GM10248 (cell line): ENCODE measurements at regions of chr9 and their contacts with region 1.

Region 1: GRCh38 chr9:37350486-37351190 is 71.9 kb upstream of the GRHPR start:
- DNase-seq: no peak
- CTCF ChIP-seq: no peak

Region 2: GRCh38 chr9:37337301-37337890 is 13.2 kb before region 1 on chr9:
- CTCF ChIA-PET with region 1: interaction called, 10 read pairs
- POLR2A ChIA-PET with region 1: no interaction called
- DNase-seq: no peak
- CTCF ChIP-seq: no peak

Region 3: DNA sequence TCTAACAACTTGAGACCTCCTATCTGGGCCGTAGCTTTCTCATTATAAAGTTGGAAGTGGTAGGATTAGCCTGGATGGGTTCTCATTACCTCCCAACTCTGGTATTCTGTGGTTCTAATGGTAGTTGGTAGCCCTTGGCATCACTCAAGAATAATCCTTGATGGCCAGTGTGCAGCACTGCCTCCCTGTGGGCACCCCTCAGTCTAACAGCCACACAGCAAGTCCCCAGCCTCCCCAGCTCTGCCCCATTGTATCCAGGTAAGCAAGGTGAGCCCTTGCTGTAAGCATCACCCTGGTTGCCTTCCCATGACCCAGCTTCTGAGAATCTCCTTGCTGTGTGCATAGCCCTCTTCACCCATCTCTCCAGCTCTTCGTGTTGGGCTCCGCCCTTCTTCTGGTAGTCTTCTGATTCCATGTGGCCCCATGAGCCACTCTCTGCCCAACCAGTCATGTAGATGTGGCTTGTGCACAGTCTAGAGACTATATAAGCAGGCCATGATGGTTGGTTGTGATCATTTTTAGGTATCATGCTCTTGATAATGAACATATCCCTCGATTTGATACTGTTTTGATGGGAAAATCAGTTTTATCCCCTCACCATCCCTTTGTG is 14.2 kb after region 1 on chr9:
- CTCF ChIA-PET with region 1: interaction called, 17 read pairs
- POLR2A ChIA-PET with region 1: interaction called, 10 read pairs
- DNase-seq: no peak
- CTCF ChIP-seq: peak; percentile 31

Region 4: DNA sequence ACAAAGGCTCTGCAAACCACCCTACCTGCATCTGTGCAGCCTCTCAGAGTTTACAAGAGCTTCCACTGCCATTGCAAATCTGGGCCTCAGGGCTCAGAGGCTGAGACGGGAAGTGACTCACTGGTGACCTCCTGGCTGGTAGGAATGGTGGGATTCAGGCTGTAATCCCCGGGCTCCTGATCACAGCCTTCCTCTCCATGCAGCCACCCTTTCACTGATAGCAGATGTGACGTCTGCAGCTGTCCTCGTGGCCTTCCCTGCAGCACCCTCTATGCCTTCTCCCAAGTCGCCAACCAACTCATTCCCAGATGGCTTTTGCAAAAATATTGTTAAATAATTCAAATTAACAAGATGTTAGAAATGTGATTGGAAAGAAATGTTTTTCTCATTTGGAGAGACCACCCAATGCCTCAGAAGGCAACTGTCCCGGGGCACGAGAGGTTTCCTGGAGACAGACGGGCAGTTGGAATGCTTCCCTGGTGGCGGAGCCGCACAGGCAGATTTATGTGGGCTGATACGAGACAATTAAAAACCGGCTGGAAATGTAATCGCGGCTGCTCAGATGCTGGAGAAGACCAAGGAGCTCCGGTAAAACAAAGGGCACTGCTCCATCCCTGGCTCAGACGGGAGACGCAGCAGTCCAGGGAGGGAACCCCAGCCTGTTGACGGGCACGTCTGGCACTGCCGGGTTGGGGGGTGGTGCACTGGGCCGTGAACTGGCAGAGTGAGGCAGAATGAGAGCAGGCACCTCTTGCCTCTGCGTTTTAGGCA is 587.7 kb after region 1 on chr9:
- CTCF ChIA-PET with region 1: no interaction called
- POLR2A ChIA-PET with region 1: no interaction called
- DNase-seq: no peak
- CTCF ChIP-seq: no peak

Region 5: GRCh38 chr9:37953775-37954437 is 603.3 kb after region 1 on chr9:
- CTCF ChIA-PET with region 1: no interaction called
- POLR2A ChIA-PET with region 1: no interaction called
- DNase-seq: peak; percentile 75
- CTCF ChIP-seq: no peak